ENCODE measurements at regions of chr3 and their contacts with region 1.

Region 1: GRCh38 chr3:152268555-152269425 is at the start of gene MBNL1:
- DNase-seq: peak; percentile 90
- H3K4me3 Mint-ChIP-seq: peak within 1 kb of the TSS; percentile 92
- H3K27ac Mint-ChIP-seq: peak within 1 kb of the TSS; percentile 95
- H3K4me1 Mint-ChIP-seq: peaks cover 56% of the 10 kb centered on the region
- H3K27me3 Mint-ChIP-seq: no peaks in the 10 kb centered on the region
- total RNA-seq, gene MBNL1: 289 to 305 TPM

Region 2: DNA sequence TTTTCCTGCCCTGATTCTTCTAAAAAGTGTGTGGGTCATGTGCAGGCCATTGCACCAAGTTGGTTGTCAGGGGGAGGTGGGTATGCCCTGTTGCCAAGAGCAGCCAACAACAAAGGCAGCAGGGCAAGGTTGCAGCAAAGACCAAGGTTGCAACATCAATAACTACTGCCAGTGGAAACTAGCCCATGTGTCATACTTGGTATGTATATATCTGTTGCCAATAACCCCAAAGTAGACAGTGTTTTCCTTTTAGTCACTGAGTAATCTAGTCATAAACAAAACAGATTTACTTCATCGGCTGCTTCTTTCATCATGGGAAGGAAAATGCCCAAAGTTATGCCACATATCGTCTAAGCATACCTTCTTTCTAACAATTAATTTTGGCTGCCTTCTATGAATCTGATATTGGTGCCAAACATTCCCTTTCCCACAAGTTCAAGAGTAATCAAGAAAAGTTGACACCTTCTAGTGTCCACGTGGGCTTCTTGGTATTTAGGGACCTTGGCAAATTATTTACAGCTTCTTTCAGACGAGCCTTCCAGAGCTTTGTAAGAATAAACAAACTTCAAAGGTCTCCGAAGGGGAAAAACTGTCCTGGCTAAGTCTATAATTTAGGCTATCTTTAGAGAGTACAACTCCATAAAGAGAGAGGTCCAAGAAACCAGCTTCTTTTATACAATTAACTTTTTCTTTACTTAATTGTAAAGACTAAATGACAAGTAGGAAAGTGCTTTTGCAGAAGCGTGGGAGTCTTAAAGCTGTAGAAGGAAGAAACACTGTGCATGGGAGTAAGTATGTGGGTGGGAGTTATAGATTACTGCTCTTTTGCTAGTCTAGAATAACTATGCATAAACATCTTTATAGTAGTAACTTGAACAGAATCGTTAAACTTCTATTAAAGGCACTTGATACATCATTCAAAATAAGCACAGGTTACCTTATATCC is 10.1 kb before region 1 on chr3:
- CTCF ChIA-PET with region 1: interaction called, 22 read pairs
- POLR2A ChIA-PET with region 1: interaction called, 229 read pairs
- DNase-seq: peak; percentile 67
- H3K4me3 Mint-ChIP-seq: peak overlapping the region; percentile 62
- H3K27ac Mint-ChIP-seq: peak overlapping the region; percentile 91
- H3K4me1 Mint-ChIP-seq: peaks cover 78% of the 10 kb centered on the region
- H3K27me3 Mint-ChIP-seq: no peaks in the 10 kb centered on the region

Region 3: DNA sequence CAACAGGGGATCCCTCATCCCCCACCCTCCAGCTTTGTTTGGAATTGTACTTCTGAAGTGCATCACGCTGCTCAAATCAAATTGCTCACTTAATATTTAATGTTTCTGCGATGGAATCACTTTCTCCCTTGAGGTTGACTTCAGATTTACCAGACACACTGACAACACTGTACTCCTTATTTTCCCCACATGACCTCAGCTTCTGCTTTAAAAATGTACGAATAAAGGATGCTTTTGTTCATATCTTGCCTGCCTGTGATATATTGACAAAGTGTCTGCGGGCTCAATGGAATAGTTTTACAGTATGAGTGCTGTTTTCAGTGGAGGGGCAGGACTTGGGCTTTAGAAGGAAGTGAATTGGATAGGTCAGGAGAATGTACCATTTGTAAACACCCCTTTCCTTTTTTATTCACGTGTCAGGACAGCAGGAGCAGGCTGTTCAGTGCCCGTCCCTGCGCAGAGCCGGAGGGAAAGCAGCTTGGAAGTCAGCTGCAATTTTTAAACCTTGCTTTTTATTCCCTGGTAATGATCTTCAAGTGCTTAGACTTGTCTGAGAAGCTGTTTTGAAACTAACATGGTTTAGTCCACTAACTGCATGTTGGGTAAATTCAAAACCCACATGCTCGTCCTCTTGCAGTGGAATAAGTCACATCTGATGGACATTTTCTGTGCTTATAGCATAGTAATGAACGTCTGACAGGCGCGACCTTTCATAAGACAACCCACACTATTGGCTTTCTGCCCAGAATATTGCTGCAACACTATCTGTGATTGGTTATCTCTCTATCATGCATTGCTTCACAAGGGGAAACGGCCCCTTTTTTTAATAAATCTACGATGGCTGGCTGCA is 29.8 kb after region 1 on chr3:
- CTCF ChIA-PET with region 1: no interaction called
- POLR2A ChIA-PET with region 1: interaction called, 93 read pairs
- DNase-seq: peak; percentile 44
- H3K4me3 Mint-ChIP-seq: peak overlapping the region; percentile 56
- H3K27ac Mint-ChIP-seq: peak overlapping the region; percentile 67
- H3K4me1 Mint-ChIP-seq: peaks cover 69% of the 10 kb centered on the region
- H3K27me3 Mint-ChIP-seq: no peaks in the 10 kb centered on the region

Region 4: DNA sequence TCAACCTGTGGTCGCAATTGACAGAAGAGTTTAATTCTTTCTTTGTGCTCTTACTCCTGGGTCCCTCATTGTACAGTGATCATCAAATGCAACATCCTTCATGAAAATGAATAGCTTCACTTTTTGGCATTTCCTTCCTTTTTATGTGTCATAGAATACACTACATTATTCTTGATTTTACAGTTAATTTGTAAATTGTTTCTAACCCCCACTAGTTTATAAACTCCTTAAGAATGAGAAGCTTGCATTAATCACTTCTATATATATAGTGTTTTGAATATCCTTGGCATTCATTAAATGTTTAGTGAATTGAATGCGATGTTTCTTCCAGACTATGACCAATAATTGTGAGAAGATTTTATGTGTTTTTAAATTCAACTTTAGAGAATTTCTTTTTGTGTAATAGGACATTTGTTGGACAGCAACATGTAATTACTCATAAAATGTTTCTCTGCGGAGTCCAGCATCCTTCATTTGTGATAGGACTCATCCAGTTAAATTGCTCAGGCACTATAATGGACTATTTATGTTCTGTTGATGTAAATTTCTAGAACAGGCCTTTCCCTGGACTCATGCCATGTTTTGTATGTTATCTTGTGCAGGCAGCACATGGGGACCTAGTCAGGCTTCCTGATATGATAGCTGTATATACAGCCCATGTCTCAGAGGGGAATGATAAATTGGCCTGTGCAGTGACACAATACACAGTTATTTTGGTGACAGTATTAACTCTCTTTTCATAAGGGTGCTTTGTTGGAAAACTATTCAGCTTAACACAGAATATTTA is 51.2 kb after region 1 on chr3:
- CTCF ChIA-PET with region 1: no interaction called
- POLR2A ChIA-PET with region 1: interaction called, 11 read pairs
- DNase-seq: no peak
- H3K4me3 Mint-ChIP-seq: no peak overlapping the region
- H3K27ac Mint-ChIP-seq: no peak overlapping the region
- H3K4me1 Mint-ChIP-seq: peaks cover 79% of the 10 kb centered on the region
- H3K27me3 Mint-ChIP-seq: no peaks in the 10 kb centered on the region

Measured in activated CD4-positive, alpha-beta memory T cell treated with anti-CD3 and anti-CD28 coated beads, Interleukin-2, amount 10 ng/mL, durations not matched to agents 7 days and 5 days (primary cell).